Posterior cingulate gyrus (tissue), 11 donors: ENCODE measurements at regions of chr9 and their contacts with region 1.

Region 1: DNA sequence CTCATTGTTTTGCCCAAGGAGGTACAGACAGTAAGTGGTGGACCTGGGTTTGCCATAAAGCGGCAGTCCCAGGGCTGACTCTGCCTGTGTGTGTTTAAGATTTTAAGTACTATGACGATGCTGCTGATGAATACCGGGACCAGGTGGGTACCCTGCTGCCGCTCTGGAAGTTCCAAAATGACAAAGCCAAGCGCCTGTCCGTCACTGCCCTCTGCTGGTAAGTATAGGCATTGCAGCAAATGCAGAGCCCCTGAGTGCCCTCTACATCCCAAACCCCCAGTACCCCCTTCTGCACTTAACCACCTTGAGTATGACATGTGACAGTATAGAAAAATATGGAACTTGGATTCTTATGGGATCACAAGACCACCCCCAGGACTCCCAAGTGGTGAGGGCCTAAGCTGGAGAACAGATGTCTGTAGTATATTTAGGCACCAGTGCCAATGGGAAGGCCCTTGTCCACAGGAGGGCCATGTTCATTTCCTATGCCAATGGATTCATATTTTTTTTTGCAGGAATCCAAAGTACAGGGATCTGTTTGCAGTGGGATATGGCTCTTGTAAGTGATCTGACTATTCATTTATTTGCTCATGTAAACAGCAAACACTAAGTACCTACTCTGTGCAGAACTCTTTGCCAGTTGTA is 22.0 kb downstream of the ENHO start:
- DNase-seq: peak in 9 of 10 donors; percentile 54 to 95 (median 80)

Region 2: GRCh38 chr9:34328987-34329832 is 171.5 kb before region 1 on chr9 and contains the starts of genes KIF24 and NUDT2:
- intact Hi-C with region 1: loop called (anchors 1 kb)
- DNase-seq: peak; percentile 93 to 99 (median 96)

Region 3: GRCh38 chr9:34437006-34437925 is 63.5 kb before region 1 on chr9:
- intact Hi-C with region 1: loop called (anchors 1 kb)
- DNase-seq: peak in 5 of 10 donors; percentile 31 to 82 (median 50)

Region 4: GRCh38 chr9:34522971-34523797 is 22.4 kb after region 1 on chr9 and contains the start of gene ENHO:
- intact Hi-C with region 1: loop called (anchors 1 kb)
- DNase-seq: peak; percentile 85 to 99 (median 90)

Region 5: GRCh38 chr9:34591248-34591916 is 90.6 kb after region 1 on chr9:
- intact Hi-C with region 1: loop called (anchors 1 kb)
- DNase-seq: peak; percentile 85 to 98 (median 91)

Region 6: DNA sequence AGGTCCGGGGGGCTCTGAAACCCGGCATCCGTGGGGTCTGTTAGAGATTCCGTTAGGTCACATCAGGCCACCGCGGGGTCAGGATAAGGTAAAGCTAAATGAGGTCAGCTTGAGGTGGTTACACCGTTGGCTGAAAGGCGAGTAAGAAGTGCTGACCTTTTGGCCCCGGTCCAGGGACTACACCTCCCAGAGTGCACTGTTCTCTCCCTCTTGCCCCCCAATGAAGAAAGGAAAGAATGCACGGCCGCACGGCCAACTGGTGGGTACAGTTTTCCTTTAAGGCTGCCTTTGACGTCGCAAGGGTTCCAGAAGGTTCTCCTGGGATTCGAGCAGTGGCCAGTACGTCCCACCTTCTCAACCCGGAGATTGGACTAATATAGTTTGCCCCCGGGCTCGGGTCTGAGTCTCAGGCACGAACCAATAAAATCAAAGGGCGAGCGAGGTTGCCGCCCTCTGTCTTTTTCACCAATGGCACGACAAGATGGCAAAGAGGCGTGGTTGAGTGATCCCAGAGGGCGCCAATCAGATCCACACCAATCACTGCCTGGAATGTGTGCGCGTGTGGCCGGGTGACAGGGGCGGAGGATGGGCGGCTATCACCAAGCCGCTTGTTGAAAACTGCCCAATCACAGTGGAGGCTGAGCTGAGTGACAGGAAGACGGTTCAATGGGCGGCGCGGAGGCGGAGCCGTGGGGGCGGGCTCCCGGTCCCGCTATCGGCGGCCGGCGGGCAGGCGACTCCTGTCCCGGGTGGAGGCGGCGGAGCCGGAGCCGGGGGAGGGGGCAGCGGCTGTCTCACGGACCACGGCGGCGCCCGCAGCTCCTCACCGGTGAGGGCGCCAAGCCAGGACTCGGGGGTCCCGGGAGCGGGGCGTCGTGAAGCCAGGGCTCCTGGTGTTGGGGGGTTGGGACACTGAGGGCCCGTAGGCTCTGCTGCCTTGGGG is 488.5 kb after region 1 on chr9 and contains the start of gene DNAJB5:
- intact Hi-C with region 1: no loop called
- DNase-seq: peak; percentile 98 to 100 (median 100)